AG04449 (cell line): ENCODE measurements at regions of chr6 and their contacts with region 1.

Region 1: DNA sequence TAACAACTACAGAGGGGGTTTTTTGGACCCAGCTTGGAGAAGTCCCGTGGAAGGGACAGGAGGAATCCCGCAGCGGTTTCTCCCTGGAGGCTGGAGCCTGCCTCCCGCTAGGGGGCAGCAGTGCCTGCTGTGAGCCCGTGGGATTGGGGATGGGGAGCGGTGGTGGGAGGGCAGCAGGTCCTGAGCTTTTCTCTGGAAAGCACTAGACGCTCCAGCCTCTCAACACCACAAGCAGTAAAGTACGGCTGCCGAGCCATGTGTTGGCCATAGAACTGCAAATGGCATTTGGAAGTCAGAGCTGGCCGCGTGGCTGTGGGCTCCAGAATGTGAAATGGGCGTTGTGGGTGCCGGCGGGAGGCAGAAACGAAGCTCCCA is 47.7 kb downstream of the GMPR start:
- DNase-seq: no peak
- H3K4me3 ChIP-seq: peak overlapping the region; percentile 25; the same call in 1 of the 2 replicates
- CTCF ChIP-seq: peak; percentile 95

Region 2: GRCh38 chr6:16136621-16137450 is 149.3 kb before region 1 on chr6:
- CTCF ChIA-PET with region 1: no interaction called
- POLR2A ChIA-PET with region 1: no interaction called
- DNase-seq: no peak
- H3K4me3 ChIP-seq: no peak overlapping the region
- CTCF ChIP-seq: no peak

Region 3: DNA sequence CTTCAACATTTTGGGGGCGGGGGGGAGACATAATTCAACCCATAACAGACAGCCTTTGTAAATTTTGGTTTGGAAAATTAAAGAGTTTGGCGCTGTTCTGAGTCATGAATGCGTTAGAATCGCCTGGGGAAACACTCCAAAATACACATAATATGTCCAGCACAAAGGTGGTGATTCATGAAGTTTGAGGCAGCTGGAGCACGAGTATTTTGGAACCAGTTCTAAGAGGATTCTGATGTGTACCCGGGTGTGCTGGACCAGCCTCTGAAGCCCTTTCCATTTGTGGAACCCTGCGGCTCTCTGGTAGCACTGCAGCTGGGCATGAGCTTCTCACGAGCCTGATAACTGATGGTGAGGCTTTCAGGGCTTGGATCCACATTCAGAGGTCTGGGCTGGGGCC is 43.1 kb before region 1 on chr6:
- CTCF ChIA-PET with region 1: interaction called, 10 read pairs
- POLR2A ChIA-PET with region 1: no interaction called
- DNase-seq: no peak
- H3K4me3 ChIP-seq: no peak overlapping the region
- CTCF ChIP-seq: no peak

Region 4: GRCh38 chr6:16267428-16268263 is 18.5 kb before region 1 on chr6:
- CTCF ChIA-PET with region 1: interaction called, 138 read pairs
- POLR2A ChIA-PET with region 1: no interaction called
- DNase-seq: no peak
- H3K4me3 ChIP-seq: no peak overlapping the region
- CTCF ChIP-seq: no peak

Region 5: DNA sequence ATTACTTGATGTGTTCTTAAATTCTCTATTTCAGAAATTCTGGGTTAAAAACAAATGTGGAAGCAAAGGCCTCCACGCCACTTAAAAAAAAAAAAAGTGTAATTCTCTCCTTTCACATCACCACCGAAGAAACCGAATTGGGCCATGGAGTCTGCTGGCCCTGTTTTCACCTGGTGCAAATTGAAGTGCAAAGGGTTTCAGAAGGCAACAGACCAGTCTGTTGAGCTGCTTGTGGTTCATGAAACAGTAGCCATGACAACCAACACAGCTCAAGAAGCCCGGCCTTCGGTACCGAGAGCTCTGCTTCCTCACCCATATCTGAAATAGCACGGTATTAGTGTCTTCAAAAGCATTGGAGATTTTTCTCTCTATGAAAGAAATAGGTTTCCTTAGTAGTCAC is 15.4 kb after region 1 on chr6:
- CTCF ChIA-PET with region 1: interaction called, 58 read pairs
- POLR2A ChIA-PET with region 1: no interaction called
- DNase-seq: no peak
- H3K4me3 ChIP-seq: no peak overlapping the region
- CTCF ChIP-seq: no peak

Region 6: DNA sequence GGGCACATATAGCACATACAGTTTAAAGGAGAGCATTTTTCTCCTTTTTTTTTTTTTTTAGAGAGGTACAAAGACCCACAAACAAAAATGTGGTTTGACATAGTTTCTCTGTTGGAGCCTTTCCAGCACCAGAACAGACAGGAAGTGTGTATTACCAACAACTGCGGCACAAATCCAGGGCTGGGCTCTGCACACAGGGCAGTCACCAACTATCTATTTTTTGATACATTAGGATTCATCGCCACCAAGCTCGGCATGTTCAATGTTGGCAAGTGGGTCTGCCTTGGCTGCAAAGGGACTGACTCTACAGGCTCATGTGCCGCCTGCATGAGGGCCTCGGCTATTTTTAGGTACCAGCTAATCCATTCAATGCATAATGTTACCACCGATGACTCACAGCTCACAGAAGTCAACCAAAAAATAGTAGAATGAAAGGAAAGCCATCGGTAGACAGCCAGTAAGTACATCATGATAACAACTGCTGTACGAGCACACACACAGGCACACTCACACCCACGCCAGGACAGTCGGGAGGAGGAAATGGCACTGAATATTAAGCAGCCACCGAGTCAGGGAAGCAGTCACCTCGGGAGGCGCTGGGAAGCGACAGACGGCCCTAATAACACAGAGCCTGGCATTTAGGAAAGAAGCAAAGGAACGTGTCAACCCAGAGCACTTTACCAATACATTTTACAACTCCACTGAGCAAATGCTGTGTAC is 33.8 kb after region 1 on chr6:
- CTCF ChIA-PET with region 1: interaction called, 79 read pairs
- POLR2A ChIA-PET with region 1: no interaction called
- DNase-seq: no peak
- H3K4me3 ChIP-seq: peak overlapping the region; percentile 57
- CTCF ChIP-seq: no peak

Region 7: DNA sequence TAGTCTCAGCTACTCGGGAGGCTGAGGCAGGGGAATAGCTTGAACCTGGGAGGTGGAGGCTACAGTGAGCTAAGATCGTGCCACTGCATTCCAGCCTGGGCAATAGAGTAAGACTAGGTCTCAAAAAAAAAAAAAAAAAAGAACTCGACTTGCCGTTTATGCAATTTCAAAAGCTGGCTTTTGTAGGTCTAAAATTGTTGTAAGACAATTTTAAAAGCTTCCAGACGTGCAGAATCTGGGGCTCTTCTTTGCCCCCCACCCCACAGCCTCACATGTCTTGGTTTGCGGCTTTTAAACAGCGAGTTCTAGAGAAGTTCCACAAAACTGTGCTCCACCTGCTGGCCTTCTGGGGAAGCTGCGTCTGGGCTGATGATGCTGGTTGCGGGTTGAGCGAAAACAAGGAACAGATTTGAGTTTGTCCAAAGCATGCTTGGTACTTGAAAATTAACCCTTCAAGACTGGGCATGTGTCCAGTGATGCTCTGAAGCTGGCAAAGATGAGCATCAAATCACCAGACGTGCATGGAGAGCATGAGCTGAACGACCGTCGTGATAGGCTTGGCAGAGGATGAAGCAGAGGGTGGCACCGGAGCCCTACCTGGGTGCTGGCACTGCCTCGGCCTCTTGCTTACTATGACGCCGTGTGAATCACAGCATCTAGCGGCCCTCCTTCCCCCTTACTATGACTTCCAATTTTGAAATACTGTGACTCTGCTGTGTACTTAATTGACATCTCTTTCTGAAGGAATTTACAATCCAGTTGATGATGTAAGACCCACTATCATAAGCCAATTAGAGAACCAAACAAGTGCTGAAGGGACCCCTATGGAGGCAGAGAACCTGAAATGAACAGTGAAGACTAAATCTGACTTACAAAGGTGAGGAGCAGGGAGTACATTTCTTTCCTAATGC is 123.7 kb after region 1 on chr6:
- CTCF ChIA-PET with region 1: interaction called, 23 read pairs
- POLR2A ChIA-PET with region 1: no interaction called
- DNase-seq: no peak
- H3K4me3 ChIP-seq: no peak overlapping the region
- CTCF ChIP-seq: peak; percentile 90

Region 8: DNA sequence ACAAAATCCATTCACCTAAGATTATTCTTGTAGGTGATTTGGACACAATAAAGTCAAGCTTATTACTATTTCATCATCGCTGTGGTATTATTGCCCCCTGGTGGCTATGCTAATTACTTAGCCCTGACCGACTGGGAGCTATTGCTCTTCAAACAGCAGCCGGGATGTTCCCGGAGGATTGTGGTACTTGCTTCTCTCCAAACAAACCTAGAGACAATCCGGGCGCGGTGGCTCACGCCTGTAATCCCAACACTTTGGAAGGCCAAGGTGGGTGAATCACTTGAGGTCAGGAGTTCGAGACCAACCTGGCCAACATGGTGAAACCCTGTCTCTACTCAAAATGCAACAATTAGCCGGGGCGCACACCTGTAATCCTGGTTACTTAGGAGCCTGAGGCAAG is 800.3 kb after region 1 on chr6:
- CTCF ChIA-PET with region 1: interaction called, 27 read pairs
- POLR2A ChIA-PET with region 1: no interaction called
- DNase-seq: peak; percentile 24
- H3K4me3 ChIP-seq: no peak overlapping the region
- CTCF ChIP-seq: peak; percentile 57